ENCODE measurements at regions of chr11 and their contacts with region 1.

Region 1: DNA sequence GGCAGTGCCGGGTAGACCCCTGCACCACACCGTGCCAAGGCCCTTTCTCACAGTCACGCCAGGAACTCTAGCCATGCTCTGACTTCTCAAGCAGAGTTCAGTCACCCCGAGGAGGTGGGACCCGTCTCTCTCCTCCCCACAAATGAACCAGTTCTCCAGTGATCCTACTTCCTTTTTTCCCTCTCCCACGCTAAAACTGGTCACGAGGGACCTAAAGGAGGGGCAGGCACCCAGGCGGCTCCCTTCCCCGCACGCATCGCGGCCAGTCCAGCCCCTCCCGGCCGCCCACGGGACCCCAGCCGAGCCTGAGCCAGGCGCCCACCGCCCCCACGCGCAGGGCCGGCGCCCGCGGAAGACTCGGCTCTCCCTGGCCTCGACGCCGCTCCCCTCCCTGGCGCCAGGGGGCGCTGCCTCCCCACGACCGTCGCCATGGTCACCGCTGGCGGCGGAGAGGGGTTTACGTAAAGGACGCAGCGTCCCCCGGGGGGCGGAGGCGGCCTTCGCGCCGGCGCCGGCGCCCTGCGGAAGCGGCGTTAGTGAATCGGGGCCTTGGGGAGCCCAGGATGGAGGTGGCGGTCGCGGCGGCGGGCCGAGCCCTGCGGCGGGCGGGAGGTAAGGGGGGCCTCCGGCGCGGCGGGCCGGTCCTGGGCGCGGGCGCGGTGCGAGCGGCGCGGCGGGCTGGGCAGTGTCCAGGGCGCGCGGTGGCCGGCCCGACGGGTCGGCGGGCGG is at the start of gene DAGLA:
- DNase-seq: peak; percentile 93
- total RNA-seq, gene DAGLA: 1.8 to 2.4 TPM

Region 2: GRCh38 chr11:61347916-61348461 is 332.1 kb before region 1 on chr11:
- intact Hi-C with region 1: no loop called
- DNase-seq: peak; percentile 83

Region 3: DNA sequence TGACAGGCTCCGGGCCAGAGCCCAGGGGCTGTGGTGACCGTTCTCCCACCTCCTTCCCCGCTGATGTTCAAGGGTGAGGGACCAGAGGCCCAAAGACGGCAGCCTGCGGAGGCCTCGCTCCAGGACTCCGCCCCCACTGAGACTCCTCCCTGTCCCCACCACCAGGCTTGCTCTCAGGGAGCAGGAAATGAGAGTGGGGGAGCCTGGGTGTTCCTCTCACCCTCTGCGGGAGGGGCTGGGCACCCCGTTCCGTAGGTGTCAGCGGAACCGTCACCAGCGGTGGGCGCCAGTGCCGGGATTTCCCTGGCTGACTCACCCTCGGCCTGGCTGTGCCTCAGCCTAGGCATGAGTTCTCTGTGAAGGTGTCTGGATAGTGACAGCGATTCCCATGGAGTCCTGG is 15.9 kb after region 1 on chr11:
- intact Hi-C with region 1: no loop called
- DNase-seq: peak; percentile 93

Region 4: DNA sequence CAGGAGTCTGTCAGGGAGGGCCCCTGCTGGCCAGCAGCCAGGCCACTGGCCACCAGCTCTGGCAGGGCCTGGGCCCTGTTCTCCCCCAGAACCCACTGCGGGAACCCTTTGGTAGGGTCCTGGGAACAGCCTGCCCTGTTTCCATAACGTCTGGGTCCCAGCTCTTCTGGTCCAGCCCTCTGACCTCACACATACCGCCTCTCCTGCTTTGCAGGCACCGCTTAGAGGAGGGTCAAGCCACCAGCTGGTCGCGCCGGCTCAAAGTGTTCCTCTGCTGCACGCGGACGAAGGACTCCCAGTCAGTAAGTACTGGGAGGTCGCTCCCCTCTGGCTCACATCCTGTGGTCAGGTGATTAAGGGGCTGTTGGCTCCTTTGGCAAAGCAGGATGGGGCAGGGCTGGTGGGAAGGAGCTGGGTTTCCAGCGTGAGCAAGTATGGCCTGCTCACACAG is 45.7 kb after region 1 on chr11:
- intact Hi-C with region 1: loop called in 1 of 2 experiments (anchors 2 kb)
- DNase-seq: no peak

Region 5: GRCh38 chr11:61733120-61733978 is 53.3 kb after region 1 on chr11:
- intact Hi-C with region 1: loop called (anchors 2 kb)
- DNase-seq: peak; percentile 96